Left ventricle myocardium inferior (tissue), 1 donor: ENCODE measurements at regions of chr10 and their contacts with region 1.

Region 1: GRCh38 chr10:114550756-114551635 is 107.1 kb downstream of the ABLIM1 start:
- DNase-seq: peak; percentile 65
- H3K4me3 ChIP-seq: peak overlapping the region; percentile 41
- H3K27ac ChIP-seq: peak overlapping the region; percentile 82
- H3K4me1 ChIP-seq: peaks cover 100% of the 10 kb centered on the region
- H3K27me3 ChIP-seq: no peaks in the 10 kb centered on the region
- CTCF ChIP-seq: peak; percentile 58

Region 2: GRCh38 chr10:114684085-114684821 is 133.3 kb after region 1 on chr10:
- intact Hi-C with region 1: loop called (anchors 10 kb)
- DNase-seq: peak; percentile 62
- H3K4me3 ChIP-seq: peak overlapping the region; percentile 70
- H3K27ac ChIP-seq: peak overlapping the region; percentile 91
- H3K4me1 ChIP-seq: peaks cover 98% of the 10 kb centered on the region
- H3K27me3 ChIP-seq: no peaks in the 10 kb centered on the region
- CTCF ChIP-seq: no peak

Region 3: GRCh38 chr10:114779803-114780609 is 229.0 kb after region 1 on chr10:
- intact Hi-C with region 1: loop called (anchors 2 kb)
- DNase-seq: no peak
- H3K4me3 ChIP-seq: no peak overlapping the region
- H3K27ac ChIP-seq: peak overlapping the region; percentile 40
- H3K4me1 ChIP-seq: peaks cover 41% of the 10 kb centered on the region
- H3K27me3 ChIP-seq: no peaks in the 10 kb centered on the region
- CTCF ChIP-seq: no peak